MCF 10A (cell line): ENCODE measurements at regions of chr11 and their contacts with region 1.

Region 1: GRCh38 chr11:57493507-57494503 is 21.7 kb downstream of the SLC43A1 start:
- DNase-seq: peak; percentile 82
- H3K4me3 Mint-ChIP-seq: no peak overlapping the region
- H3K27ac Mint-ChIP-seq: no peak overlapping the region
- H3K4me1 Mint-ChIP-seq: peaks cover 13% of the 10 kb centered on the region
- H3K27me3 Mint-ChIP-seq: peaks cover under 1% of the 10 kb centered on the region
- CTCF ChIP-seq: peak; percentile 88

Region 2: GRCh38 chr11:56841210-56841810 is 652.5 kb before region 1 on chr11:
- CTCF ChIA-PET with region 1: no interaction called
- POLR2A ChIA-PET with region 1: no interaction called
- intact Hi-C with region 1: no loop called
- DNase-seq: peak; percentile 78
- H3K4me3 Mint-ChIP-seq: no peak overlapping the region
- H3K27ac Mint-ChIP-seq: no peak overlapping the region
- H3K4me1 Mint-ChIP-seq: peaks cover 21% of the 10 kb centered on the region
- H3K27me3 Mint-ChIP-seq: no peaks in the 10 kb centered on the region
- CTCF ChIP-seq: peak; percentile 79

Region 3: DNA sequence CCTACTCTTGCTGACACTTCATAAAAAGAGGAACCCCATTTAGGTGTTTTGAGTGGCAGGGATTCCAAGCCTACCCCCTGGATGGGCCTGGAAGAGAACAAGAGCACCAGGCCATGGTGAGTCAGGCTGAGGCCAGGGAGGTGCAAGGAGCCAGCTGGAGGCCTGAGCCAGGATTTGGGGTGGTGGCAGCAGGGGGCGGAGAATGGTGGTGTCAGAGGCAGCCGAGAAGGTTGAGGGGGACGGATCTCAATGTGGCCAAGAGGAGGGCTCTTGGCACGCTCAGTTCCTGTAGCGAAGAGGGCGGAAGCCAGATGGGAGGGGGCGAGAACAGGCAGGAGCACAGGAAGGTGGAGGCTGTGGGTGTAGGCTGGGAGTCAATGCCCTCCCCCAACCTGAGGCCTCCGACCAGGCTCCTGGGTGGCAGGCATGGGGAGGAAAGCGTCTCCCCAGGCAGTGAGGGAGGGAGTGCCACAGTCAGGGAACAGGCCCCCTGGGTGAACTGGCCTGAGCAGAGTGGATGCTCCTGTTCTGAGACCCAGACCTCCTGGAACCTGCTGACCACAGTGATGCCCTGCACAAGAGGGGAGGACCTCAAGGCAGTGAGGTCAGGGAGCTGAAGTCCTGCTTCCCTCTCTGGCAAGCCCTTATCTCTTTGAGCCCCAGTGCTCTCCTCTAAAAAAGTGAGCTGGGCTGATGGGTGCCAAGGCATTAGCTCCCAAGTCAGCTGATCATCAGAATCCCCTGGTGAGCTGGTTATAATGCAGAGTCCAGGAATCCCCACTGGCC is 19.6 kb before region 1 on chr11:
- CTCF ChIA-PET with region 1: interaction called, 45 read pairs
- POLR2A ChIA-PET with region 1: interaction called, 4 read pairs
- intact Hi-C with region 1: no loop called
- DNase-seq: no peak
- H3K4me3 Mint-ChIP-seq: no peak overlapping the region
- H3K27ac Mint-ChIP-seq: no peak overlapping the region
- H3K4me1 Mint-ChIP-seq: no peaks in the 10 kb centered on the region
- H3K27me3 Mint-ChIP-seq: no peaks in the 10 kb centered on the region
- CTCF ChIP-seq: no peak

Region 4: GRCh38 chr11:57508341-57509170 is 14.8 kb after region 1 on chr11:
- CTCF ChIA-PET with region 1: interaction called, 32 read pairs
- POLR2A ChIA-PET with region 1: no interaction called
- intact Hi-C with region 1: no loop called
- DNase-seq: no peak
- H3K4me3 Mint-ChIP-seq: no peak overlapping the region
- H3K27ac Mint-ChIP-seq: no peak overlapping the region
- H3K4me1 Mint-ChIP-seq: no peaks in the 10 kb centered on the region
- H3K27me3 Mint-ChIP-seq: no peaks in the 10 kb centered on the region
- CTCF ChIP-seq: no peak

Region 5: GRCh38 chr11:57599381-57599780 is 105.6 kb after region 1 on chr11:
- CTCF ChIA-PET with region 1: no interaction called
- POLR2A ChIA-PET with region 1: no interaction called
- intact Hi-C with region 1: no loop called
- DNase-seq: no peak
- H3K4me3 Mint-ChIP-seq: no peak overlapping the region
- H3K27ac Mint-ChIP-seq: no peak overlapping the region
- H3K4me1 Mint-ChIP-seq: peaks cover 8% of the 10 kb centered on the region
- H3K27me3 Mint-ChIP-seq: no peaks in the 10 kb centered on the region
- CTCF ChIP-seq: no peak

Region 6: GRCh38 chr11:57644748-57645688 is 151.2 kb after region 1 on chr11:
- CTCF ChIA-PET with region 1: interaction called, 98 read pairs
- POLR2A ChIA-PET with region 1: no interaction called
- intact Hi-C with region 1: no loop called
- DNase-seq: peak; percentile 83
- H3K4me3 Mint-ChIP-seq: no peak overlapping the region
- H3K27ac Mint-ChIP-seq: no peak overlapping the region
- H3K4me1 Mint-ChIP-seq: peaks cover 28% of the 10 kb centered on the region
- H3K27me3 Mint-ChIP-seq: peaks cover 35% of the 10 kb centered on the region
- CTCF ChIP-seq: peak; percentile 59